ENCODE measurements at regions of chr3 and their contacts with region 1.

Region 1: GRCh38 chr3:157865352-157866000 is 240.7 kb downstream of the SHOX2 start:
- DNase-seq: peak; percentile 9
- H3K4me3 Mint-ChIP-seq: no peak overlapping the region
- H3K27ac Mint-ChIP-seq: no peak overlapping the region
- H3K4me1 Mint-ChIP-seq: no peaks in the 10 kb centered on the region
- H3K27me3 Mint-ChIP-seq: no peaks in the 10 kb centered on the region

Region 2: GRCh38 chr3:157713101-157713500 is 152.4 kb before region 1 on chr3:
- intact Hi-C with region 1: no loop called
- DNase-seq: no peak
- H3K4me3 Mint-ChIP-seq: no peak overlapping the region
- H3K27ac Mint-ChIP-seq: no peak overlapping the region
- H3K4me1 Mint-ChIP-seq: no peaks in the 10 kb centered on the region
- H3K27me3 Mint-ChIP-seq: no peaks in the 10 kb centered on the region

Region 3: DNA sequence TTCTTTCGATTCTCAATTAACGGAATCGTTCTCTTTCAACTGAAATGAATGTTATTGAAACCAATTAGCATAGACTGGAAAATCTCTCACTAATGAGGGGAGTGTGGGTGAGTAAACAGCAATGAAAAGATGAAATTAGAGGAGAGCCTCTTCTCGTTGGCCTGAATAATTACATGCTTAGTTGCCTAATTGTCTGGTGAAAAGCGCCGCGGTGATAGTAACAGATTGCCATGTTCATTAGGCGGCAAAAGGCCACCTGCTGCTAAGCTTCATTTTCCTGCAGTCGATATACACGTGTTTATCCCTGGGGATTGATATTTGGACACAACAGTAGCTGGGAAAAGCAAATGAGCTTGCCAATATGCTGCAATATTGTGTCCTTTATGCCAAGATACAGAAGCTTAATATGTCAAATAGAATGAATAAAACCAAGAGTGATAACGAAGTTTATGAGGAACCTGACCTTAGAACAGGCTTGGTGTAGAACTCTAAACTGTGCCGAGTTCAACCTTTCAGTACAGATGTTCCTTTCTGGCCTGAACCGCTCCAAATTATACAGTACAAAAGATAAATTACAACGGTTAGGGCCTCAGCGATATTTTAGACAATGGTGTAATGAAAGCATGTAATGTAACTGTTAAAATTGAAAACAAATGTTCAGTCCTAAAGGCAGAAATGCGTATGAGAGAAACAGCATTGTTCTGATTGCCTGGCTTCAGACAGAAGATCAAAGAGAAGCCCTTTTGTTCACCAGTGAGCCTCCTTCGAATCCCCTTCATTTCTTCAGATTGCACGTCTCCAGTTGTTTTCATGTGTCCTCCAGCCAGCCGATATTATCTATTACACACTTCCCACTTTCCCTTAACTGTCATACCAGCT is 55.6 kb after region 1 on chr3:
- intact Hi-C with region 1: no loop called
- DNase-seq: no peak
- H3K4me3 Mint-ChIP-seq: no peak overlapping the region
- H3K27ac Mint-ChIP-seq: no peak overlapping the region
- H3K4me1 Mint-ChIP-seq: no peaks in the 10 kb centered on the region
- H3K27me3 Mint-ChIP-seq: no peaks in the 10 kb centered on the region

Region 4: GRCh38 chr3:157958457-157958856 is 93.0 kb after region 1 on chr3:
- intact Hi-C with region 1: no loop called
- DNase-seq: no peak
- H3K4me3 Mint-ChIP-seq: no peak overlapping the region
- H3K27ac Mint-ChIP-seq: no peak overlapping the region
- H3K4me1 Mint-ChIP-seq: no peaks in the 10 kb centered on the region
- H3K27me3 Mint-ChIP-seq: no peaks in the 10 kb centered on the region

Region 5: DNA sequence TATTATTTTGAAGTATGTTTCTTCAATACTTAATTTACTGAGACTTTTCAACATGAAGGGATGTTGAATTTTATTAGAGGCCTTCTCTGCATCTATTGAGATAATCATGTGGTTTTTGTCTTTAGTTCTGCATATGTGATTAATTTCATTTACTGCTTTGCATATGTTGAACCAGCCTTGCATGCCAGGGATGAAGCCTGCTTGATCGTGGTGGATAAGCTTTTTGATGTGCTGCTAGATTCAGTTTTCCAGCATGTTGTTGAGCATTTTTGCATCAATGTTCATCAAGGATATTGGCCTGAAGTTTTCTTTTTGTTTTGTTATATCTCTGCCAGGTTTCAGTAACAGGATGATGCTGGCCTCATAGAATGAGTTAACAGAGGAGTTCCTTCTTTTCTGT is 378.8 kb after region 1 on chr3:
- intact Hi-C with region 1: no loop called
- DNase-seq: no peak
- H3K4me3 Mint-ChIP-seq: no peak overlapping the region
- H3K27ac Mint-ChIP-seq: no peak overlapping the region
- H3K4me1 Mint-ChIP-seq: peaks cover 3% of the 10 kb centered on the region
- H3K27me3 Mint-ChIP-seq: no peaks in the 10 kb centered on the region

Region 6: GRCh38 chr3:158313338-158313927 is 448.0 kb after region 1 on chr3:
- intact Hi-C with region 1: loop called (anchors 10 kb)
- DNase-seq: no peak
- H3K4me3 Mint-ChIP-seq: no peak overlapping the region
- H3K27ac Mint-ChIP-seq: no peak overlapping the region
- H3K4me1 Mint-ChIP-seq: no peaks in the 10 kb centered on the region
- H3K27me3 Mint-ChIP-seq: no peaks in the 10 kb centered on the region

Region 7: GRCh38 chr3:158434412-158435038 is 569.0 kb after region 1 on chr3:
- intact Hi-C with region 1: loop called (anchors 10 kb)
- DNase-seq: peak; percentile 9
- H3K4me3 Mint-ChIP-seq: no peak overlapping the region
- H3K27ac Mint-ChIP-seq: no peak overlapping the region
- H3K4me1 Mint-ChIP-seq: no peaks in the 10 kb centered on the region
- H3K27me3 Mint-ChIP-seq: no peaks in the 10 kb centered on the region

Region 8: DNA sequence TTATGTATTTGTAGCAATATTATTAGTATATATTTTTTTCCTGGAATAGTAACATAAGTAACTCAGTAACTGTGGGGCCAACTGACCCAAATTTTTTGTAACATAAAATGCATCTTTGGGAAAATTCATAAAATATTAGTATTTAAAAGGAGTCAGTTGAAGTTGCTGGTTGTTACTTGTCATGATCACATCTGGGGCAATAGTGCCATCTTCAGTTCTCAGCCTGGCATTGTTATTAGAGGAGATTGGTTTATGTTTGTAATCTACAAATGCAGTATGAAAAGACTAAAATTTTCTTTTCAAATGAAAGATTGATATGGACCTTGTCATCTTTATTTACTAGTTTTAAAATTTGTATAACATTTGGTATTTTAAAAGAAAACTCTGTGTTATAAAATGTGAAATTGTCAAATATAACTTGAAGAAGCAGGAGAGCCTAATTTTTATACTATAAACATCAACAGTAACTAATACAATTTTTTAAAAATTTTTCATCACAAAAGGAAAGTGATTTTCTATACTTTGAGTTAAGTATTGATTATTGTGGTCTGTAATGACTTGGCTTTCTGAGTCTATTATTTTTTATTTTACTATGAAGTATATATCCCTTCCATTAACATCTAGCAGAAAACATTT is 666.7 kb after region 1 on chr3:
- intact Hi-C with region 1: loop called (anchors 2 kb)
- DNase-seq: no peak
- H3K4me3 Mint-ChIP-seq: no peak overlapping the region
- H3K27ac Mint-ChIP-seq: no peak overlapping the region
- H3K4me1 Mint-ChIP-seq: no peaks in the 10 kb centered on the region
- H3K27me3 Mint-ChIP-seq: no peaks in the 10 kb centered on the region